GM12878 (cell line): ENCODE measurements at regions of chr22 and their contacts with region 1.

Region 1: DNA sequence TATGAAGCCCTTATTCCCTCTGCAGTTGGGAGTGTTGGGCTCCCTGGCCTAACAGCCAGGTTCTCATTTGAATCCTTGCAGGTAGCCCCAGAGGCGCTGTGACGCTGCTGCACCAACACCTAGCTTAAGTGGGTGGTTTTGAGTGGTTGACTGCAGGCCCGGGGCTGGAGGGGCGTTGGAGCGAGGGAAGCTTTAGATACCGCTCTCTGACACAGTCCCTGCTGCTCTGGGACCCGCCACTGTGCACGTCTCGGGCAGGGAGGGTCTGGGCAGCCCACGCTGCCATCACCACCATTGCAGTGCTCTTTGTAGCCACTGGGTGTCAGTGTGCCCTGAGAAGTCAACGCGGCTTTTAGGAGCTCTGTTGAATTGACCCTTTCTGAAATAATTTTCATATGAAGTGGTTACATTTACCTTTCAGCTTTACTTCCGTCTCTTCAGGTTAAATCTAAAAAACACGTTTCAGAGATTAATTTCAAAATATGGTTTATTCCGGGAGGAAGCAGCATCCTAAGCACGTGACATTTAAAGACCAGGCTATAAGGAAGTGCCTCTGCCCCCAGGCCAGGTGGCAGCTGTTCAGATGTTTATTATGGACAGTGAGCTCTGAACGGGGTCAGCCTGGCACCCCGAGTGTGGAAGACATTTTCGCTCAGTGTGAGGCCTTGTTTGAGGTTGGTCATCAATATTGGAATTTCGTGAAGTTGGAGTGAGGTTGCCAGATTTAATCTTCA is 30.9 kb upstream of the PARVB start:
- DNase-seq: peak; percentile 5
- ATAC-seq: peak; percentile 84
- H3K4me3 ChIP-seq: no peak overlapping the region
- H3K27ac ChIP-seq: no peak overlapping the region
- H3K4me1 ChIP-seq: peaks cover 15% of the 10 kb centered on the region
- H3K27me3 ChIP-seq: no peaks in the 10 kb centered on the region
- CTCF ChIP-seq: peak; percentile 96 to 98 (median 97)
- EP300 ChIP-seq: no peak
- POLR2A ChIP-seq: no peak
- RAD21 ChIP-seq: peak; percentile 98

Region 2: DNA sequence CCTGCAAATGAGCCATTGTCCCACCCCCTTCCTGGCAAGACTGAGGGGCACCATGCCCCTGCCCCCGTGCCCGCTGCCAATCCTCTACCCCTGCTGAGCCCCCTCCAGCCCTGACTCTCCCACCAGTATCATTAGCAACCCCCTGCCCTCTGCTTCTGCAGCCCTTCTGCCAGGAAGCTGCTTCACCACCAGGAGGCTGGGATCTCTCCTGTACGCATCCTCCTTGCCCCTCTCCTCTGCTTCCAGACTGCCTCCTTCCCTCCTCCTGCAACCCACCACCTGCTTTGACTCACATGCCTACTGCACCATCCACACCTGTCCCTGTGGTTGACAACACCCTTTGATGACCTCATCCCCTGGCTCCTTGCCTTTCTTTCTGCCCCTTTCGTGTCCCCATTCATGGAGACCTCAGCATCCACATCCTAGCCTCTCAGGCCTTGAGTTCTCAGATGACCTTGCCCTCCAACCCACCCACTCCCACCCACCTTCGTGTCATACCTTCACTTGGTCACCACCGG is 83.0 kb before region 1 on chr22:
- CTCF ChIA-PET with region 1: no interaction called
- POLR2A ChIA-PET with region 1: no interaction called
- RAD21 ChIA-PET with region 1: no interaction called
- SMC1A ChIA-PET with region 1: no interaction called
- in situ Hi-C with region 1: no loop called
- intact Hi-C with region 1: no loop called
- DNase-seq: no peak
- ATAC-seq: no peak
- H3K4me3 ChIP-seq: no peak overlapping the region
- H3K27ac ChIP-seq: no peak overlapping the region
- H3K4me1 ChIP-seq: no peaks in the 10 kb centered on the region
- H3K27me3 ChIP-seq: peaks cover 0 to 7% of the 10 kb centered on the region in 2 experiments; a peak in 3 of 4 replicates
- CTCF ChIP-seq: no peak
- EP300 ChIP-seq: no peak
- POLR2A ChIP-seq: no peak
- RAD21 ChIP-seq: no peak

Region 3: GRCh38 chr22:43931771-43932170 is 61.4 kb before region 1 on chr22:
- CTCF ChIA-PET with region 1: no interaction called
- POLR2A ChIA-PET with region 1: no interaction called
- RAD21 ChIA-PET with region 1: no interaction called
- SMC1A ChIA-PET with region 1: no interaction called
- in situ Hi-C with region 1: no loop called
- intact Hi-C with region 1: no loop called
- DNase-seq: no peak
- ATAC-seq: no peak
- H3K4me3 ChIP-seq: no peak overlapping the region
- H3K27ac ChIP-seq: no peak overlapping the region
- H3K4me1 ChIP-seq: no peaks in the 10 kb centered on the region
- H3K27me3 ChIP-seq: no peaks in the 10 kb centered on the region; a peak in 1 of 4 replicates
- CTCF ChIP-seq: no peak
- EP300 ChIP-seq: no peak
- POLR2A ChIP-seq: no peak
- RAD21 ChIP-seq: no peak

Region 4: GRCh38 chr22:44026630-44027511 is 33.7 kb after region 1 on chr22:
- CTCF ChIA-PET with region 1: interaction called, 74 read pairs
- POLR2A ChIA-PET with region 1: interaction called, 23 read pairs
- RAD21 ChIA-PET with region 1: interaction called, 12 read pairs
- SMC1A ChIA-PET with region 1: interaction called, 29 read pairs
- in situ Hi-C with region 1: no loop called
- intact Hi-C with region 1: no loop called
- DNase-seq: peak; percentile 89
- ATAC-seq: peak; percentile 65
- H3K4me3 ChIP-seq: peak overlapping the region; percentile 78
- H3K27ac ChIP-seq: peak overlapping the region; percentile 100
- H3K4me1 ChIP-seq: peaks cover 25% of the 10 kb centered on the region
- H3K27me3 ChIP-seq: no peaks in the 10 kb centered on the region
- CTCF ChIP-seq: no peak
- EP300 ChIP-seq: peak; percentile 90 to 93
- POLR2A ChIP-seq: peak; percentile 82
- RAD21 ChIP-seq: no peak

Region 5: GRCh38 chr22:44049486-44050231 is 56.5 kb after region 1 on chr22:
- CTCF ChIA-PET with region 1: interaction called, 5 read pairs
- POLR2A ChIA-PET with region 1: no interaction called
- RAD21 ChIA-PET with region 1: interaction called, 3 read pairs
- SMC1A ChIA-PET with region 1: interaction called, 10 read pairs
- in situ Hi-C with region 1: no loop called
- intact Hi-C with region 1: no loop called
- DNase-seq: no peak
- ATAC-seq: no peak; the same call in 2 of the 3 replicates
- H3K4me3 ChIP-seq: no peak overlapping the region
- H3K27ac ChIP-seq: peak overlapping the region; percentile 27
- H3K4me1 ChIP-seq: peaks cover 35% of the 10 kb centered on the region
- H3K27me3 ChIP-seq: no peaks in the 10 kb centered on the region
- CTCF ChIP-seq: no peak
- EP300 ChIP-seq: no peak
- POLR2A ChIP-seq: no peak
- RAD21 ChIP-seq: no peak

Region 6: GRCh38 chr22:44180706-44181032 is 187.5 kb after region 1 on chr22 and contains the start of gene PARVG:
- CTCF ChIA-PET with region 1: interaction called, 12 read pairs
- POLR2A ChIA-PET with region 1: no interaction called
- RAD21 ChIA-PET with region 1: interaction called, 13 read pairs
- SMC1A ChIA-PET with region 1: interaction called, 20 read pairs
- in situ Hi-C with region 1: no loop called
- intact Hi-C with region 1: no loop called
- DNase-seq: peak; percentile 57
- ATAC-seq: peak; percentile 76
- H3K4me3 ChIP-seq: peak within 1 kb of the TSS; percentile 79
- H3K27ac ChIP-seq: peak within 1 kb of the TSS; percentile 91
- H3K4me1 ChIP-seq: peaks cover 13% of the 10 kb centered on the region
- H3K27me3 ChIP-seq: no peaks in the 10 kb centered on the region
- CTCF ChIP-seq: no peak
- EP300 ChIP-seq: no peak
- POLR2A ChIP-seq: no peak
- RAD21 ChIP-seq: no peak
- polyA plus RNA-seq, gene PARVG: 6.3 to 11.7 TPM

Region 7: DNA sequence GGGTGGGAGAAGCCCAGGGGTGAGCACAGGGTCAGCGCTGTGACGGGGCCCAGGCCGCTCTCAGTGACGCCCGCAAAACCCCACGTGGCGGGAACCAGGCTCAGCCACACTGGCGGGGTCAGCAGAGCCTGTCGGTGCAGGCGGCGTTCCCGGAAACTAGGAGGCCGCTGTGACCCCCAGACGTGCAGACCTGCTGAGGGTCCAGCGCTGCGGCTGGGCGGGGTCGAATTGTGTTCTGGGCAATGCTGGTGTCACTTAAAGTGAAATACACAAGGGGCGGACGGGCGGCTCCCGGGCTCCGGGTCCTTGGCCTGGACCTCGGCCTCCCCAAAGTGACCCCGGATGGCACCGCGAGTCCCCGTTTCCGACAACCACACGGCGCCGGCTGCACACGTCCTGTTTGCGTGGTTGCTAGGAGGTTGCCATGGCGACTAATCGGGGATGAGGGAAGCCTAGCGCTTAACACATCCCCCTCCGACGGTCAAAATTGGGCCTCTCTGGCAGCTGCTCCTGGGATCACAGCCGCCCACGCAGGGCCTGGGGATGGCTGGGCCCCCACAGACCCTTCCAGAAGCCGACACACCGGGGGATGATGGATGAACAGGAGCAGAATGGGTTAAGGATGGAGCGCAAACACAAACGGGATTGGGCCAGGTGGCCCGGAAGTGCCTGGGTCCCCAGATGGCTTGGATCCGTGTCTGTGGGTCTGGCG is 627.1 kb after region 1 on chr22:
- CTCF ChIA-PET with region 1: interaction called, 23 read pairs
- POLR2A ChIA-PET with region 1: no interaction called
- RAD21 ChIA-PET with region 1: interaction called, 8 read pairs
- SMC1A ChIA-PET with region 1: interaction called, 6 read pairs
- in situ Hi-C with region 1: loop called (anchors 5 kb)
- intact Hi-C with region 1: no loop called
- DNase-seq: no peak
- ATAC-seq: peak; percentile 81
- H3K4me3 ChIP-seq: no peak overlapping the region
- H3K27ac ChIP-seq: no peak overlapping the region
- H3K4me1 ChIP-seq: no peaks in the 10 kb centered on the region
- H3K27me3 ChIP-seq: no peaks in the 10 kb centered on the region; a peak in 2 of 4 replicates
- CTCF ChIP-seq: no peak
- EP300 ChIP-seq: no peak; a peak in 1 of 4 replicates
- POLR2A ChIP-seq: no peak
- RAD21 ChIP-seq: no peak

Region 8: GRCh38 chr22:44710474-44711457 is 717.6 kb after region 1 on chr22:
- CTCF ChIA-PET with region 1: no interaction called
- POLR2A ChIA-PET with region 1: no interaction called
- RAD21 ChIA-PET with region 1: no interaction called
- SMC1A ChIA-PET with region 1: no interaction called
- in situ Hi-C with region 1: no loop called
- intact Hi-C with region 1: no loop called
- DNase-seq: no peak
- ATAC-seq: peak; percentile 82
- H3K4me3 ChIP-seq: no peak overlapping the region
- H3K27ac ChIP-seq: no peak overlapping the region
- H3K4me1 ChIP-seq: peaks cover 8% of the 10 kb centered on the region; the same call in 1 of the 2 replicates
- H3K27me3 ChIP-seq: no peaks in the 10 kb centered on the region
- CTCF ChIP-seq: no peak
- EP300 ChIP-seq: no peak
- POLR2A ChIP-seq: no peak
- RAD21 ChIP-seq: no peak